ENCODE measurements at regions of chr1 and their contacts with region 1.

Region 1: DNA sequence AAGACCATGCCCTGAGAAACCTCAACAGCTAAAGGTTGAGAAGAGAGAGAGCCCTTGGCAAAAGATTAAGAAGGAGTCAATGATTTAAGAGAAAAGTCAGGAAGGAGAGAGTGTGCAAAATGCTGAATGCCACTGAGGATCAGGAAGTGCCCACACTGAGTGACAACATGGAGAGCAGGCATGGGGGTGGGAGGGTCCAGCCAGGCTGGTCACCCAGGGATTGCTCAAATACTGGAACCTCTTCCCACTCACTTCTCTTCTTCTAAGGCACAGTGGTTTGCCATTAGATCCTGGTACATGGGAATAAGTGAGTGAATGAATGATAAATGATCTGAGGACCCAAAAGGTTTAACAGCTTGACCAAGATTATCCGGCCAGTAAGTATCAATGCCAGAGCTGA is 11.1 kb downstream of the PRR9 start:
- DNase-seq: no peak
- H3K4me3 ChIP-seq: no peak overlapping the region
- H3K27ac ChIP-seq: no peak overlapping the region
- H3K4me1 ChIP-seq: no peaks in the 10 kb centered on the region
- H3K27me3 ChIP-seq: no peaks in the 10 kb centered on the region
- CTCF ChIP-seq: no peak
- POLR2A ChIP-seq: no peak

Region 2: DNA sequence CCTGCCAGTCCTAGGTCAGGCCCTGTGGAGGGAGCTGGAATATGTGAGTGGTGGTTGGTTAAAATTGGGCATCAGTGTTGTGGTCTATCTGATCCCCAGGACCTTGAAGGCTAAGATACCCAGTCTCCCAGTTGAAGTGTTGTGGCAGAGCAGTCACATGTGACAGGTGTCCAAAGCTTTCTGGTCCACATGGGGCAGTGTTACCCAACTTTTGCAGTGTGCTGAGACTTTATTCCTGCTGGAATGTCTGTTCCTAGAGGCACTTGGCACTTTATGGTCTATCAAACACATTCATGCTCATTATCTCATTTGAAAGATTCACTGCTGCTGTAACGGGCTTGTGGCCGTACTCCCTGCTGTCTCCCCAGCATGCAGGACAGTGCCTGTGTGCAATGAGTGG is 10.0 kb after region 1 on chr1:
- CTCF ChIA-PET with region 1: interaction called, 26 read pairs
- POLR2A ChIA-PET with region 1: no interaction called
- dilution Hi-C with region 1: no loop called
- intact Hi-C with region 1: no loop called
- DNase-seq: no peak
- H3K4me3 ChIP-seq: no peak overlapping the region
- H3K27ac ChIP-seq: no peak overlapping the region
- H3K4me1 ChIP-seq: no peaks in the 10 kb centered on the region
- H3K27me3 ChIP-seq: no peaks in the 10 kb centered on the region
- CTCF ChIP-seq: no peak
- POLR2A ChIP-seq: no peak